Ovary (tissue), 10 donors: ENCODE measurements at regions of chr10 and their contacts with region 1.

Region 1: GRCh38 chr10:26566525-26567350 is 128.6 kb downstream of the APBB1IP start:
- DNase-seq: no peak
- H3K4me3 ChIP-seq: peak overlapping the region; percentile 24
- H3K27ac ChIP-seq: no peak overlapping the region
- H3K4me1 ChIP-seq: no peaks in the 10 kb centered on the region
- H3K27me3 ChIP-seq: no peaks in the 10 kb centered on the region
- CTCF ChIP-seq: no peak
- EP300 ChIP-seq: no peak
- POLR2A ChIP-seq: no peak

Region 2: DNA sequence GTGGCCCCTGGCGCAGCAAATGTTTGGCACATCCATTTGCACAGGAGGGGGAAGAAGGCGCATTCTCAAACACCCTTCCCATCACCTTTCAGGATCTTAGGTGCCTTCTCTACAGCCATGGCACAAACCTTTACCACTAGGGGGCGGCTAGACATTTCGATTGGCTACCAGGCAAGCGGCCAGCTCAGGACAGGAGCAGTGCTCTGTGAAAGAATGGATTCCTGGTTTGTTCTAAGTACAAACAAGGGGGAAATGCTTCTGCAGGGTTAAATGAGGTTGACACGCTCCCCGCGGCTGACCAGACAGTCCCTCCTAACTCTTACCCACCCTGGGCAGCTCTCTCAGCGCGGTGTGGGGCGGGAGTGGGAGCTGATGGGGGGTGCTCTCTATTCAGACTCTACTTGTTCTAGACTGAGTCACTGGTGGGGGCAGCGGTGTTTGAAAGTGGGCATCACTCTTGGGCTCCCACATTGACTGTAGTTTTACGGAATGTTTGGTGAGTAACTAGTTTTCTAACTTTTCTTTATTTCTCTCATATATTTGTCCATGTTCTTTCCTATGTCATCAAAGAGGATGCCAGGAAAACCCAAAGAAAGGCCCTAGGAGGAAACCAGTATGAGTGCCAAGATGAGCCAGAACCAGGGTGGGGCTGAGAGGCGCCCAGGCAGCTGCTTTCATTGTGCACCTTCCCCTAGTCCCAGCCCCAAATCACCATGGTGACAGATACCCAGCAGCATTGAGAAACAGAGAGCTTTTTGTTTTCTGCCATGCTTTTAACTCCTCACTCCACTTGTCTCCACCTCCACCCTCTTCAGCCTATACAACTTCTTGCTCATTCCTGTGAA is 1453.3 kb before region 1 on chr10:
- intact Hi-C with region 1: loop called in 1 of 4 experiments (anchors 5 kb)
- DNase-seq: peak; percentile 33 to 69 (median 48)
- H3K4me3 ChIP-seq: no peak overlapping the region
- H3K27ac ChIP-seq: no peak overlapping the region
- H3K4me1 ChIP-seq: no peaks in the 10 kb centered on the region
- H3K27me3 ChIP-seq: no peaks in the 10 kb centered on the region
- CTCF ChIP-seq: no peak
- EP300 ChIP-seq: no peak
- POLR2A ChIP-seq: no peak

Region 3: GRCh38 chr10:26423722-26424121 is 143.0 kb before region 1 on chr10:
- intact Hi-C with region 1: no loop called
- DNase-seq: no peak
- H3K4me3 ChIP-seq: no peak overlapping the region
- H3K27ac ChIP-seq: no peak overlapping the region
- H3K4me1 ChIP-seq: no peaks in the 10 kb centered on the region
- H3K27me3 ChIP-seq: no peaks in the 10 kb centered on the region
- CTCF ChIP-seq: no peak
- EP300 ChIP-seq: no peak
- POLR2A ChIP-seq: no peak

Region 4: DNA sequence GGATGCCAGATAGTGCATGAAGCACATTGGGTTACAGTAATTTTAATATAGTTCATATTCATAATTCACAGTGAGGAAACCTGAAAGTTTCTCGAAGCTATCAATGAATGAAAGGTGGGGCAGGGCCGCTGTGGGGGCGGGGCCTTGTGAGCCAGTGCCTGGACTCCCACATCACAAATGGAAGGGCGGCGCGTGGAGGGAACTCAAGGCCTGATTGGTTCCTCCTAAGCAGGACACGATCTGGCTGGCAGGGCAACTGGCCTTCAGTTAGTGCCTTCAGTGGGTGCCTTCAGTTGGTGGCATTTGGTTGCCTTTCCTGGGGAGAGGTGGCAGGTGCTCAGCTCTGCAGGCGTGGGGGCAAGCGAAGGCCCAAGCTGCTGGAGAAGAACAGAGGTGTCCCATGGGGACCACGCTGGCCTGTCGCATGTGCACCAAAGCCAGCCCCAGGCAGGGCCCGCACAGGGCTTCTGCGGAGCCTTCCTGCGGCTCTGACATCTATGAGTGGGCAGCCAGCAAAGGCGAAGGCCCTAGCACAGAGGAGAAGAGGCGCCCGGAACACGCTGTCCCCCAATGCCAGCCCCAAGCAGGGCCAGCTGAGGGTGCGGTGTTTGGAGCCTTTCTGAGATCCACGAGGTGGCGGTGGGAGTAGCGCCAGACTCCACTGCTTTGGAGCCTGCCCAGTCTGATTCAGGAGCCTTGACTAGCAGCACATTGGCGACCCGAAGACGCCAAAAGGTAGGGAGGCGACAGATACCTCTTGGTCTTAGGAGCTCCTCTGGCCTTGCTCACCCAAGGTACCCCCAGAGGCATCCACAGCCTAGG is 12.7 kb after region 1 on chr10:
- intact Hi-C with region 1: no loop called
- DNase-seq: no peak
- H3K4me3 ChIP-seq: no peak overlapping the region
- H3K27ac ChIP-seq: no peak overlapping the region
- H3K4me1 ChIP-seq: no peaks in the 10 kb centered on the region
- H3K27me3 ChIP-seq: no peaks in the 10 kb centered on the region
- CTCF ChIP-seq: no peak
- EP300 ChIP-seq: no peak
- POLR2A ChIP-seq: no peak

Region 5: GRCh38 chr10:27372095-27372494 is 805.4 kb after region 1 on chr10:
- intact Hi-C with region 1: no loop called
- DNase-seq: no peak
- H3K4me3 ChIP-seq: no peak overlapping the region
- H3K27ac ChIP-seq: no peak overlapping the region
- H3K4me1 ChIP-seq: no peaks in the 10 kb centered on the region
- H3K27me3 ChIP-seq: no peaks in the 10 kb centered on the region
- CTCF ChIP-seq: no peak
- EP300 ChIP-seq: no peak
- POLR2A ChIP-seq: no peak